ENCODE measurements at regions of chr1 and their contacts with region 1.

Region 1: GRCh38 chr1:200154069-200154767 is 126.7 kb downstream of the NR5A2 start:
- DNase-seq: peak; percentile 89
- H3K4me3 Mint-ChIP-seq: peak overlapping the region; percentile 60
- H3K27ac Mint-ChIP-seq: peak overlapping the region; percentile 88
- H3K4me1 Mint-ChIP-seq: peaks cover 47% of the 10 kb centered on the region
- H3K27me3 Mint-ChIP-seq: no peaks in the 10 kb centered on the region

Region 2: GRCh38 chr1:199945591-199945990 is 208.6 kb before region 1 on chr1:
- intact Hi-C with region 1: loop called (anchors 1 kb)
- DNase-seq: no peak
- H3K4me3 Mint-ChIP-seq: no peak overlapping the region
- H3K27ac Mint-ChIP-seq: no peak overlapping the region
- H3K4me1 Mint-ChIP-seq: peaks cover 12% of the 10 kb centered on the region
- H3K27me3 Mint-ChIP-seq: peaks cover 41% of the 10 kb centered on the region

Region 3: DNA sequence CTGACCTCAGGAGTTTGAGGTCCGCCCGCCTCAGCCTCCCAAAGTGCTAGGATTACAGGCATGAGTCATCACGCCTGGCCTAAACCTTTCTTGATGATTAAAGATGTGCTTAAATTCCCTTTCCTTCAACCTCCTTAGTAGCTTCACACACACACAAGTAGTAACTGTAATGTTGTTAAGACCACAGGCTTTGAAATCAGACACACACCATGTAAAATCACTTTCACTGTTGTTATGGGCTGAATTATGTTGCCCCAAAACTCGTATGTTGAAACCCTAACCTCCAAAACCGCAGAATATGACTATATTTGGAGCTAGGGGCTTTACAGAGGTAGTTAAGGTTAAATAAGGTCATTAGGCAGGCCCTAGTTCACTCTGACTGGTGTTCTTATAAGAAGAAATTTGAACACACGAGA is 53.5 kb after region 1 on chr1:
- intact Hi-C with region 1: loop called (anchors 2 kb)
- DNase-seq: no peak
- H3K4me3 Mint-ChIP-seq: no peak overlapping the region
- H3K27ac Mint-ChIP-seq: no peak overlapping the region
- H3K4me1 Mint-ChIP-seq: peaks cover 3% of the 10 kb centered on the region
- H3K27me3 Mint-ChIP-seq: peaks cover 8% of the 10 kb centered on the region

Region 4: DNA sequence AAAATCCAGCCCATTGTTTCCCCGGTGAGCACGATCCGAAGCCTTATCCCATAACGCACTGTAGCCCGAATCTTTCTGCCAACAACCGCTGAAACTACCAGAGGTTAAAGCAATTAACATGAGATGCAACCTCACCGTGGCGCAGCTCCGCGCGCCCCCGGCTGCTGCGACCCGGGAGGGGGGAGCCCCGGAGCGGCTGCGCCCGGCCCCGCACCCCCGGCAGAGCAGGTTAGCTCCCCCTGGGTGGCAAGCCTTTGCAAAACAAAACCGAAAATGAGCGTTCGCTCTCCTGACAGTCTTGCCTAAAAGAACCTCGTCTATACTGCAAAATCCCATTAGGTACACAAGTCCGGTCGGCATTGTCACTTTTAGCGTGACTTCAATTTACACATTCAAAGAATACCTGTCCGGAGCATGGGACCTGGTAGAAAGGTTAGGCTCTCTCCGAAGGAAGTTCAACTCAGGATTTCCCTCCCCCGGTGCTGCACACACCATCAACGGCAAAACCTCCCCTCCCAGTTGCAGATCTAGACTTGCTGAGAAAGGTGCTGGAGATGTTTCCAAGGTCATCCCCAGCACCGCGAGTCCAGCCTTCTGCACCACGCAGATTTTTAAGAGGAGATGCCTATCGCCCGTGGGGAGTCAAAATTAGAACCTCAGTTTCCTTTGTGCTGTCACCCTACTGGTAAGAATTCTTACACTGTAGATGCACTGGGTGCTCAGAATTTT is 148.1 kb after region 1 on chr1:
- intact Hi-C with region 1: loop called (anchors 5 kb)
- DNase-seq: peak; percentile 90
- H3K4me3 Mint-ChIP-seq: peak overlapping the region; percentile 86
- H3K27ac Mint-ChIP-seq: peak overlapping the region; percentile 17
- H3K4me1 Mint-ChIP-seq: peaks cover 20% of the 10 kb centered on the region
- H3K27me3 Mint-ChIP-seq: peaks cover 38% of the 10 kb centered on the region

Region 5: GRCh38 chr1:200448034-200448762 is 294.0 kb after region 1 on chr1:
- intact Hi-C with region 1: loop called (anchors 1 kb)
- DNase-seq: no peak
- H3K4me3 Mint-ChIP-seq: peak overlapping the region; percentile 33
- H3K27ac Mint-ChIP-seq: peak overlapping the region; percentile 95
- H3K4me1 Mint-ChIP-seq: peaks cover 38% of the 10 kb centered on the region
- H3K27me3 Mint-ChIP-seq: no peaks in the 10 kb centered on the region

Region 6: GRCh38 chr1:200488375-200489165 is 334.4 kb after region 1 on chr1:
- intact Hi-C with region 1: loop called (anchors 1 kb)
- DNase-seq: peak; percentile 85
- H3K4me3 Mint-ChIP-seq: no peak overlapping the region
- H3K27ac Mint-ChIP-seq: no peak overlapping the region
- H3K4me1 Mint-ChIP-seq: peaks cover 15% of the 10 kb centered on the region
- H3K27me3 Mint-ChIP-seq: peaks cover 31% of the 10 kb centered on the region

Region 7: GRCh38 chr1:200888349-200888838 is 734.2 kb after region 1 on chr1:
- intact Hi-C with region 1: loop called (anchors 5 kb)
- DNase-seq: peak; percentile 86
- H3K4me3 Mint-ChIP-seq: peak overlapping the region; percentile 39
- H3K27ac Mint-ChIP-seq: no peak overlapping the region
- H3K4me1 Mint-ChIP-seq: peaks cover 41% of the 10 kb centered on the region
- H3K27me3 Mint-ChIP-seq: peaks cover 41% of the 10 kb centered on the region